ENCODE measurements at regions of chr3 and their contacts with region 1.

Region 1: DNA sequence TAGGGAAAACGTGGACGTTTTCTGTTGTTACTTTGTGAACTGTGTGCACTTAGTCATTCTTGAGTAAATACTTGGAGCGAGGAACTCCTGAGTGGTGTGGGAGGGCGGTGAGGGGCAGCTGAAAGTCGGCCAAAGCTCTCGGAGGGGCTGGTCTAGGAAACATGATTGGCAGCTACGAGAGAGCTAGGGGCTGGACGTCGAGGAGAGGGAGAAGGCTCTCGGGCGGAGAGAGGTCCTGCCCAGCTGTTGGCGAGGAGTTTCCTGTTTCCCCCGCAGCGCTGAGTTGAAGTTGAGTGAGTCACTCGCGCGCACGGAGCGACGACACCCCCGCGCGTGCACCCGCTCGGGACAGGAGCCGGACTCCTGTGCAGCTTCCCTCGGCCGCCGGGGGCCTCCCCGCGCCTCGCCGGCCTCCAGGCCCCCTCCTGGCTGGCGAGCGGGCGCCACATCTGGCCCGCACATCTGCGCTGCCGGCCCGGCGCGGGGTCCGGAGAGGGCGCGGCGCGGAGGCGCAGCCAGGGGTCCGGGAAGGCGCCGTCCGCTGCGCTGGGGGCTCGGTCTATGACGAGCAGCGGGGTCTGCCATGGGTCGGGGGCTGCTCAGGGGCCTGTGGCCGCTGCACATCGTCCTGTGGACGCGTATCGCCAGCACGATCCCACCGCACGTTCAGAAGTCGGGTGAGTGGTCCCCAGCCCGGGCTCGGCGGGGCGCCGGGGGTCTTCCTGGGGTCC is at the start of gene TGFBR2:
- DNase-seq: peak; percentile 91
- ATAC-seq: peak; percentile 73
- H3K4me3 ChIP-seq: peak within 1 kb of the TSS; percentile 90 to 99 (median 96)
- H3K4me3 Mint-ChIP-seq: peak within 1 kb of the TSS; percentile 97
- H3K27ac ChIP-seq: peak within 1 kb of the TSS; percentile 94 to 95
- H3K27ac Mint-ChIP-seq: peak within 1 kb of the TSS; percentile 97
- H3K4me1 ChIP-seq: peaks cover 65 to 76% of the 10 kb centered on the region in 2 donors
- H3K4me1 Mint-ChIP-seq: peaks cover 73% of the 10 kb centered on the region
- H3K27me3 ChIP-seq: no peaks in the 10 kb centered on the region
- H3K27me3 Mint-ChIP-seq: no peaks in the 10 kb centered on the region
- CTCF ChIP-seq: no peak
- total RNA-seq, gene TGFBR2: 189 and 199 TPM in 2 replicates

Region 2: DNA sequence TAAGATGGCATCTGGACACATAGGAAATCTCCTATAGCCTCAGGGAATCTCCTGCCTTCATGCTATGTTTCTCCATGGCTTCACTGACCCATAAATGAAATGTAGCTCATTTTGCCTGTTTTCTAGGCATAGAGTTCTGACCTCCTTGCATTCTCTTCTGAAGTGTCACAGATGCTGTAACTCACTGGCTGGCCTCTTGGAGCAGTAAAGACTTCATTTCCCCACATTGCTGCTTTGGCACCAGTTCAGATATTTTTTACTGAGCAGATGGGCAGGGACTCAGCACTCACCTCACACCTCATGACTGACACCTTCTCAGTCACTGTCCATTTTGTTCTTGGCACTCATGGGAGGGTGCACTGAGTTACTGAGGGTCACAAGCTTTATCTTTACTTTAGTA is 286.8 kb before region 1 on chr3:
- CTCF ChIA-PET with region 1: interaction called, 13 read pairs
- POLR2A ChIA-PET with region 1: interaction called, 4 read pairs
- intact Hi-C with region 1: loop called (anchors 5 kb)
- DNase-seq: peak; percentile 68
- ATAC-seq: peak; percentile 92
- H3K4me3 ChIP-seq: no peak overlapping the region
- H3K4me3 Mint-ChIP-seq: no peak overlapping the region
- H3K27ac ChIP-seq: no peak overlapping the region
- H3K27ac Mint-ChIP-seq: no peak overlapping the region
- H3K4me1 ChIP-seq: peaks cover 5% of the 10 kb centered on the region in 2 donors
- H3K4me1 Mint-ChIP-seq: peaks cover 4% of the 10 kb centered on the region
- H3K27me3 ChIP-seq: no peaks in the 10 kb centered on the region
- H3K27me3 Mint-ChIP-seq: no peaks in the 10 kb centered on the region
- CTCF ChIP-seq: peak; percentile 77

Region 3: GRCh38 chr3:30475038-30475808 is 131.2 kb before region 1 on chr3:
- CTCF ChIA-PET with region 1: interaction called, 6 read pairs
- POLR2A ChIA-PET with region 1: no interaction called
- intact Hi-C with region 1: loop called (anchors 5 kb)
- DNase-seq: peak; percentile 73
- ATAC-seq: peak; percentile 93
- H3K4me3 ChIP-seq: peak overlapping the region in 1 of 5 experiments; percentile 21
- H3K4me3 Mint-ChIP-seq: peak overlapping the region; percentile 69
- H3K27ac ChIP-seq: peak overlapping the region in 1 of 2 donors; percentile 53
- H3K27ac Mint-ChIP-seq: peak overlapping the region; percentile 75
- H3K4me1 ChIP-seq: peaks cover 51 to 55% of the 10 kb centered on the region in 2 donors
- H3K4me1 Mint-ChIP-seq: peaks cover 60% of the 10 kb centered on the region
- H3K27me3 ChIP-seq: no peaks in the 10 kb centered on the region
- H3K27me3 Mint-ChIP-seq: no peaks in the 10 kb centered on the region
- CTCF ChIP-seq: no peak

Region 4: DNA sequence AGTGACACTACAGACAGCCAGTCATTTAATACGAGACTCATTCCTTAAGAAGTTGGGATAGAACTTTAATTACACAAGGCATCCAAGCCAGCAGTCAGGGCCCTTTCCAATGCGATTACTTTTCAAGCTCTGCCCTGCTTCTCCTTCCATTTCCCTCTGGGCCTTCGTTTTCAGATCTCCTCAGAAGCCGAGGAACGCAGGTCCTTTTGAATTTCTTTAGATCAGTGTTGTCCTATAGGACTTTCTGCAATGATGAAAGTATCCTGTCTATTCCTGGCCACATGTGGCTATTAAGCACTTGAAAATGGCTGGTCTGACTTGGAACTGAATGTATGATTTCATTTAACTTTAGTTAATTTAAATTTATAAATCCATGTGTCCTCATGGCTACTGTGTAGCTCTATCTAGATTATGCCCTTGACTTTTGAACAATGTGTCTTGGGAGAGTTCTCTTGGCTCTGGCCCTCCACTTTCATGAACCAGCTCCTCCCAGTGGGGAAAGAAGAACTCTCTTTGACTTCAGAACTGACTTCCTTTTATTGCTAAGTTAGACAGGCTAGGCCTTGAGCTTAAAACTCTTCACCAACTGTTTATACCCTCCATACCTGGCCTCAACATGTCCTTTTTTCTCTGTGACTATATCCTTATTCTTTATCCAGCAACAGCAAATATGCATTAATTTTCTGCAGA is 22.6 kb after region 1 on chr3:
- CTCF ChIA-PET with region 1: interaction called, 12 read pairs
- POLR2A ChIA-PET with region 1: interaction called, 3 read pairs
- intact Hi-C with region 1: loop called (anchors 1 kb)
- DNase-seq: peak; percentile 75
- ATAC-seq: peak; percentile 54
- H3K4me3 ChIP-seq: peak overlapping the region in 3 of 5 experiments; percentile 2 to 46 (median 26)
- H3K4me3 Mint-ChIP-seq: peak overlapping the region; percentile 72
- H3K27ac ChIP-seq: peak overlapping the region; percentile 73 to 89
- H3K27ac Mint-ChIP-seq: peak overlapping the region; percentile 87
- H3K4me1 ChIP-seq: peaks cover 91 to 99% of the 10 kb centered on the region in 2 donors
- H3K4me1 Mint-ChIP-seq: peaks cover 92% of the 10 kb centered on the region
- H3K27me3 ChIP-seq: no peaks in the 10 kb centered on the region
- H3K27me3 Mint-ChIP-seq: no peaks in the 10 kb centered on the region
- CTCF ChIP-seq: peak; percentile 53

Region 5: GRCh38 chr3:30658328-30659052 is 52.0 kb after region 1 on chr3:
- CTCF ChIA-PET with region 1: interaction called, 8 read pairs
- POLR2A ChIA-PET with region 1: interaction called, 6 read pairs
- intact Hi-C with region 1: loop called (anchors 2 kb)
- DNase-seq: peak; percentile 74
- ATAC-seq: peak; percentile 83
- H3K4me3 ChIP-seq: peak overlapping the region in 2 of 5 experiments; percentile 2 to 23
- H3K4me3 Mint-ChIP-seq: peak overlapping the region; percentile 69
- H3K27ac ChIP-seq: peak overlapping the region; percentile 56 to 82
- H3K27ac Mint-ChIP-seq: peak overlapping the region; percentile 87
- H3K4me1 ChIP-seq: peaks cover 85 to 97% of the 10 kb centered on the region in 2 donors
- H3K4me1 Mint-ChIP-seq: peaks cover 93% of the 10 kb centered on the region
- H3K27me3 ChIP-seq: no peaks in the 10 kb centered on the region
- H3K27me3 Mint-ChIP-seq: no peaks in the 10 kb centered on the region
- CTCF ChIP-seq: no peak

Measured in B cell (primary cell).